CD4-positive, alpha-beta memory T cell (primary cell): ENCODE measurements at regions of chr9 and their contacts with region 1.

Region 1: GRCh38 chr9:98101868-98102273 is 17.2 kb downstream of the TRIM14 start:
- DNase-seq: peak; percentile 85 to 95 (median 94)
- H3K4me3 ChIP-seq: peak overlapping the region in 1 of 2 donors; percentile 40
- H3K4me3 Mint-ChIP-seq: peak overlapping the region; percentile 67 to 85 (median 78)
- H3K27ac ChIP-seq: peak overlapping the region; percentile 64
- H3K27ac Mint-ChIP-seq: peak overlapping the region; percentile 91 to 98 (median 94)
- H3K4me1 ChIP-seq: peaks cover 99% of the 10 kb centered on the region
- H3K4me1 Mint-ChIP-seq: peaks cover 58 to 94% (median 77%) of the 10 kb centered on the region in 4 donors
- H3K27me3 ChIP-seq: no peaks in the 10 kb centered on the region
- H3K27me3 Mint-ChIP-seq: no peaks in the 10 kb centered on the region

Region 2: GRCh38 chr9:97906236-97906831 is 195.5 kb before region 1 on chr9:
- CTCF ChIA-PET with region 1: interaction called, 3 read pairs
- POLR2A ChIA-PET with region 1: interaction called, 10 read pairs
- intact Hi-C with region 1: no loop called
- DNase-seq: peak; percentile 63 to 89 (median 70)
- H3K4me3 ChIP-seq: peak overlapping the region in 1 of 2 donors; percentile 45
- H3K4me3 Mint-ChIP-seq: peak overlapping the region; percentile 80 to 94 (median 86)
- H3K27ac ChIP-seq: peak overlapping the region; percentile 73
- H3K27ac Mint-ChIP-seq: peak overlapping the region; percentile 93 to 99 (median 98)
- H3K4me1 ChIP-seq: peaks cover 100% of the 10 kb centered on the region
- H3K4me1 Mint-ChIP-seq: peaks cover 57 to 94% (median 76%) of the 10 kb centered on the region in 4 donors
- H3K27me3 ChIP-seq: no peaks in the 10 kb centered on the region
- H3K27me3 Mint-ChIP-seq: no peaks in the 10 kb centered on the region

Region 3: GRCh38 chr9:97938081-97938644 is 163.7 kb before region 1 on chr9 and contains the start of gene HEMGN:
- CTCF ChIA-PET with region 1: no interaction called
- POLR2A ChIA-PET with region 1: no interaction called
- intact Hi-C with region 1: no loop called
- DNase-seq: peak; percentile 59 to 80 (median 74)
- H3K4me3 ChIP-seq: no peak within 1 kb of the TSS
- H3K4me3 Mint-ChIP-seq: peak within 1 kb of the TSS in 7 of 8 donors; percentile 31 to 79 (median 51)
- H3K27ac ChIP-seq: peak within 1 kb of the TSS; percentile 38
- H3K27ac Mint-ChIP-seq: peak within 1 kb of the TSS; percentile 67 to 93 (median 89)
- H3K4me1 ChIP-seq: peaks cover 32% of the 10 kb centered on the region
- H3K4me1 Mint-ChIP-seq: peaks cover 20 to 37% (median 28%) of the 10 kb centered on the region in 4 donors
- H3K27me3 ChIP-seq: no peaks in the 10 kb centered on the region
- H3K27me3 Mint-ChIP-seq: no peaks in the 10 kb centered on the region
- total RNA-seq, gene HEMGN: 1.6 to 2.3 TPM

Region 4: DNA sequence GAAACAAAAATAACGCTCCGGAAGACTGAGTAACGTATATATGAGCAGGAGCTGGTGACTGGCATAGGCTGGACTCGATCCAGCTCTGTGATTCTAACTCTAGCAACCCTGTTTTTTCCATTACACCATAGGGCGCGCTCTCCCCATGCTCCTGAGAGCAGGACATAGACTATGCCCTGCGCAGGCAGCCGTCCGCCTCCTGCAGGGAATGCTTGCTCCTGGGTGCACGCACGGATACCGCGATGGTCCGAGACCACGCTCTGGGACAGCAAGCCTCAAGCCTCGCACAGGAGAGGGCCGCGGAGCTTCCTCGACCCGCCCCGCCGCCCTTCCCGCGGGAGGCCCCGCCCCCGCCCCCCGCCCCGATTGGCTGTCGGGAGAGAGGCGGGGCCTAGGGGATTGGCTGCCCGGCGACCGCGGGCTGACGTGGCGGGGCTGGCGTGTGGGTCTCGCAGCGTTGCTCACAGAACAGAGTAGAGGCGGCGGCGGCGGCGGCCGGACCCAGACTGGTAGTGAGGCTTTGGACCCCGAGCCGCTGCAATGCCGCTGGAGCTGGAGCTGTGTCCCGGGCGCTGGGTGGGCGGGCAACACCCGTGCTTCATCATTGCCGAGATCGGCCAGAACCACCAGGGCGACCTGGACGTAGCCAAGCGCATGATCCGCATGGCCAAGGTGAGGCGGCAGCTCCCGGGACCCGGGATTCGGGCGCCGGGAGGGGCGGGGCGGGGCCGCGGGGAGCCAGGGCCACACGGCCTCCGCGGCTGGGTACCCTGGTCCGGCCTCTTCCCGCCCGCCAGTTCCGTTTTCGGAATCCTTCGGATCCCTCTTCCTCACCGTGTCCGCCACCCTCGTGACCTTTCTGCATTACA is 45.4 kb before region 1 on chr9 and contains the start of gene NANS:
- CTCF ChIA-PET with region 1: no interaction called
- POLR2A ChIA-PET with region 1: interaction called, 14 read pairs
- intact Hi-C with region 1: no loop called
- DNase-seq: peak; percentile 88 to 94 (median 90)
- H3K4me3 ChIP-seq: peak within 1 kb of the TSS; percentile 56 to 76
- H3K4me3 Mint-ChIP-seq: peak within 1 kb of the TSS; percentile 96 to 100 (median 99)
- H3K27ac ChIP-seq: peak within 1 kb of the TSS; percentile 82
- H3K27ac Mint-ChIP-seq: peak within 1 kb of the TSS; percentile 90 to 99 (median 99)
- H3K4me1 ChIP-seq: peaks cover 22% of the 10 kb centered on the region
- H3K4me1 Mint-ChIP-seq: peaks cover 12 to 32% (median 22%) of the 10 kb centered on the region in 4 donors
- H3K27me3 ChIP-seq: no peaks in the 10 kb centered on the region
- H3K27me3 Mint-ChIP-seq: no peaks in the 10 kb centered on the region
- total RNA-seq, gene NANS: 22.1 to 23.2 TPM

Region 5: DNA sequence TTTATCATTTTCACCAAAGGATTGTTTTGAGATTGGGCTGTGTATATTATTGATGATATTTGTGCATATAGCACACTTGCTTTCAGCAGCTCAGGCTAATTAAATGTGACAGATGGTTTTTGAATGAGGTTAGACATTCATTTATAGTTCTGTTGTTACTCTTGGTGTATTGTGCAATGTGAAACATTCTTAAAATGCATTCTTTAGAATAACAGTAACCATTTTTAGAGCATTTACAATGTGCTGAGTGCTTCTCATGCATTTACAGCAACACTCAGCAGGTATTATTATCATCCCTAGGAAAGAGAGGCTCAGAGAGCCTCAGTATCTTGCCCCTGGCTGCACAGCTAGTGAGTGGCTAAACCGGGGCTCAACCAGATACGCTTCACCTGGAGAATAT is 21.5 kb before region 1 on chr9:
- CTCF ChIA-PET with region 1: interaction called, 23 read pairs
- POLR2A ChIA-PET with region 1: interaction called, 15 read pairs
- intact Hi-C with region 1: loop called (anchors 1 kb)
- DNase-seq: no peak
- H3K4me3 ChIP-seq: no peak overlapping the region
- H3K4me3 Mint-ChIP-seq: no peak overlapping the region
- H3K27ac ChIP-seq: no peak overlapping the region
- H3K27ac Mint-ChIP-seq: peak overlapping the region in 6 of 7 donors; percentile 13 to 83 (median 42)
- H3K4me1 ChIP-seq: peaks cover 35% of the 10 kb centered on the region
- H3K4me1 Mint-ChIP-seq: peaks cover 35 to 56% (median 47%) of the 10 kb centered on the region in 4 donors
- H3K27me3 ChIP-seq: no peaks in the 10 kb centered on the region
- H3K27me3 Mint-ChIP-seq: no peaks in the 10 kb centered on the region

Region 6: DNA sequence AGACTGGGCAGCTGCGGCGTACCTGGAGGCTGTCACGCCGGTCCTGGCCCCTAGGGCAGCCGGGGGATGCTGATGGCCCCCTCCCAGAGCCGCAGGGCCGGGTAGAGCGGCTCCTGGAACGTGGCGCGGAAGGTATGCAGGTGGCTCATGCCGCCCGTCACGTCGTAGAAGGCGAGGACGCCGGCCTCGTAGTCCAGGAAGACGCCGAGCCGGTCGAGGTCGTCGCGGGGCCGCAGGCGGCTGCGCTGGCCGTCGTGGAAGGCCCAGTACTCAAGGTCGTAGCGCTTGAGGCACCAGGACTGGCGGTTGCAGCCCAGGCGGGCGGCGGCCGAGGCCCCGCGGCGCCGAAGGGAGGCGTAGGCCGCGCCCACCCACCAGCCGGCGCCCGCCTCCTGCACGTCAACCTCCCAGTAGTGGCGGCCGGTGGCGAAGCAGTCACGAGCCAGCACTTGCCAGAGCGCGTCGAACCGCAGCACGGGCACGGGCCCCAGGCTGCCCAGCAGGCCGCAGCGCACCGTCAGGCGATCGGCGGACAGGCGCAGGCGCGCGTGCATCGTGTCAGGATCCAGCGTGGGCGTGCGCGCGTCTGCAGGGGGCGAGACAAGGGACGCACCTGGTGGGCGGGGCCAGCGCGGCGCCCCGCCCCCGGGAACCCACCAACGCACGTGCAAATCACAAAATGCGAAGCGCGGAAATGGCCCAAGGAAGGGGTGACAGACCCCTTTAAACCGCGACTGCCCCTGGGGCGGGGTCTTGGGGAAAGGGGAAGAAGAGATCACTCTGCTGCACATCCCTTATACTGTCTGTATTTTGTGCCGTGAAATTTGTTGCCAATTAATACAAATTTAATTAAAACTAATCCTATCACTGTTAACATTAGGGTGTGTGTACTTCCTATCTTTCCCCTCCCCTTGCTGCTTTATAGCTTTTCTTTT is 14.2 kb before region 1 on chr9:
- CTCF ChIA-PET with region 1: interaction called, 13 read pairs
- POLR2A ChIA-PET with region 1: interaction called, 19 read pairs
- intact Hi-C with region 1: no loop called
- DNase-seq: peak in 3 of 5 donors; percentile 35 to 51 (median 43)
- H3K4me3 ChIP-seq: no peak overlapping the region
- H3K4me3 Mint-ChIP-seq: peak overlapping the region in 3 of 8 donors; percentile 31 to 66 (median 39)
- H3K27ac ChIP-seq: no peak overlapping the region
- H3K27ac Mint-ChIP-seq: peak overlapping the region in 1 of 7 donors; percentile 53
- H3K4me1 ChIP-seq: peaks cover 2% of the 10 kb centered on the region
- H3K4me1 Mint-ChIP-seq: peaks cover 25 to 60% (median 40%) of the 10 kb centered on the region in 4 donors
- H3K27me3 ChIP-seq: no peaks in the 10 kb centered on the region
- H3K27me3 Mint-ChIP-seq: no peaks in the 10 kb centered on the region

Region 7: GRCh38 chr9:98192503-98193335 is 90.8 kb after region 1 on chr9 and contains the start of gene CORO2A:
- CTCF ChIA-PET with region 1: interaction called, 6 read pairs
- POLR2A ChIA-PET with region 1: interaction called, 31 read pairs
- intact Hi-C with region 1: no loop called
- DNase-seq: peak; percentile 64 to 72 (median 70)
- H3K4me3 ChIP-seq: peak within 1 kb of the TSS; percentile 52 to 67
- H3K4me3 Mint-ChIP-seq: peak within 1 kb of the TSS; percentile 83 to 95 (median 91)
- H3K27ac ChIP-seq: peak within 1 kb of the TSS; percentile 53
- H3K27ac Mint-ChIP-seq: peak within 1 kb of the TSS; percentile 63 to 91 (median 85)
- H3K4me1 ChIP-seq: peaks cover 44% of the 10 kb centered on the region
- H3K4me1 Mint-ChIP-seq: peaks cover 16 to 50% (median 37%) of the 10 kb centered on the region in 4 donors
- H3K27me3 ChIP-seq: no peaks in the 10 kb centered on the region
- H3K27me3 Mint-ChIP-seq: no peaks in the 10 kb centered on the region
- total RNA-seq, gene CORO2A: 8.3 to 8.6 TPM